Sciatic nerve (tissue), 2 donors: ENCODE measurements at regions of chr1 and their contacts with region 1.

Region 1: DNA sequence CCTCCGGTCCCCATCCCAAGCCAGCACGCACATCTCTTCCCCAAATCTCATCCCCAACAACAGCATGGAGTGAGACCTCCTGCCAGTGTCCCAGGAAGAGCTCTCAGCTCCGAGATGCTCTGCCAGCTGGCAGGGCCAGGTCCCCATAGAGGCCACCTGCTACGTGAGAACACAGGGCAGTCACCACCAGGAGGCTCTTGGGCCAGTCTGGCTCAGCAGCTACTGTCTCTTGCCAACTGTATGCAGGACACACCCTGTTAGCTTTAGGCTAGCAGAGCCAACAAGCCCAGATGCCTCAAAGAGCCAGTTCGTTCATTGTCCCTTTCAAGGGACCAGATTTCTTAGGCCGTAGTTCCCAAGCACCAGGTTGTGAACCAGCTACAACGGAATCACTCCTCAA is 36.9 kb downstream of the FBXO2 start:
- DNase-seq: no peak
- ATAC-seq: no peak

Region 2: DNA sequence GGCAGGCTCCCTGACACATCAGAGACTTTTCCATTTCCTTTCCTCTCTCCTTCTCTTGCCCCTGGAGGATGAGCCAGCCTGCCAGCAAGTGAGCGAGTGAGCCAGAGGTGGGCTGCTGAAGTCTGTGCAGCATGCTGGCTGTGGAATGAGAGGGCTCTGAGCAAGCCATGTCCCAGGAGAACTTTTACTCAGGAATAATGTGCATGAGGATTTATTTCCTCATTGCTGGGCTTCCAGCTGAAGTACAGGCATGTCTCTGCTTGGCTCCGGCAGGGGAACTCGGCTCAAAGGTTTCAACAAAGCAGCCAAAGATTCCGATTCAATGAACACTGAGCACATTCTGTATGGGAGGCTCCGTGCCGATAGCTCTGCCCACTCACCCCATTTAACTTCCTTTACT is 300.6 kb before region 1 on chr1:
- intact Hi-C with region 1: loop called (anchors 10 kb)
- DNase-seq: no peak
- ATAC-seq: peak; percentile 52

Region 3: GRCh38 chr1:11448375-11449099 is 168.8 kb before region 1 on chr1:
- intact Hi-C with region 1: no loop called
- DNase-seq: no peak
- ATAC-seq: no peak